ENCODE measurements at regions of chr11 and their contacts with region 1.

Region 1: GRCh38 chr11:83156150-83156995 is 558 bp upstream of the PCF11 start:
- DNase-seq: peak; percentile 94 to 99 (median 99)
- H3K4me3 ChIP-seq: peak overlapping the region; percentile 94 to 96
- H3K4me3 Mint-ChIP-seq: peak overlapping the region; percentile 99 to 100 (median 100)
- H3K27ac ChIP-seq: peak overlapping the region; percentile 98
- H3K27ac Mint-ChIP-seq: peak overlapping the region; percentile 99 to 100 (median 100)
- H3K4me1 ChIP-seq: peaks cover 23% of the 10 kb centered on the region
- H3K4me1 Mint-ChIP-seq: peaks cover 17 to 45% (median 28%) of the 10 kb centered on the region in 4 donors
- H3K27me3 ChIP-seq: no peaks in the 10 kb centered on the region
- H3K27me3 Mint-ChIP-seq: no peaks in the 10 kb centered on the region

Region 2: GRCh38 chr11:82906244-82906654 is 250.1 kb before region 1 on chr11:
- CTCF ChIA-PET with region 1: interaction called, 18 read pairs
- POLR2A ChIA-PET with region 1: interaction called, 124 read pairs
- intact Hi-C with region 1: loop called (anchors 1 kb)
- DNase-seq: peak in 4 of 5 donors; percentile 45 to 51 (median 48)
- H3K4me3 ChIP-seq: no peak overlapping the region
- H3K4me3 Mint-ChIP-seq: no peak overlapping the region
- H3K27ac ChIP-seq: no peak overlapping the region
- H3K27ac Mint-ChIP-seq: no peak overlapping the region
- H3K4me1 ChIP-seq: peaks cover 18% of the 10 kb centered on the region
- H3K4me1 Mint-ChIP-seq: peaks cover 11 to 22% (median 16%) of the 10 kb centered on the region in 4 donors
- H3K27me3 ChIP-seq: no peaks in the 10 kb centered on the region
- H3K27me3 Mint-ChIP-seq: no peaks in the 10 kb centered on the region

Region 3: GRCh38 chr11:82969811-82970210 is 186.6 kb before region 1 on chr11:
- CTCF ChIA-PET with region 1: no interaction called
- POLR2A ChIA-PET with region 1: interaction called, 16 read pairs
- intact Hi-C with region 1: loop called (anchors 1 kb)
- DNase-seq: no peak
- H3K4me3 ChIP-seq: no peak overlapping the region
- H3K4me3 Mint-ChIP-seq: peak overlapping the region in 2 of 8 donors; percentile 2 to 43
- H3K27ac ChIP-seq: no peak overlapping the region
- H3K27ac Mint-ChIP-seq: no peak overlapping the region
- H3K4me1 ChIP-seq: peaks cover 7% of the 10 kb centered on the region
- H3K4me1 Mint-ChIP-seq: peaks cover 18 to 39% (median 19%) of the 10 kb centered on the region in 4 donors
- H3K27me3 ChIP-seq: no peaks in the 10 kb centered on the region
- H3K27me3 Mint-ChIP-seq: no peaks in the 10 kb centered on the region

Region 4: GRCh38 chr11:83087035-83087434 is 69.3 kb before region 1 on chr11:
- CTCF ChIA-PET with region 1: interaction called, 6 read pairs
- POLR2A ChIA-PET with region 1: interaction called, 12 read pairs
- intact Hi-C with region 1: no loop called
- DNase-seq: no peak
- H3K4me3 ChIP-seq: no peak overlapping the region
- H3K4me3 Mint-ChIP-seq: no peak overlapping the region
- H3K27ac ChIP-seq: no peak overlapping the region
- H3K27ac Mint-ChIP-seq: peak overlapping the region in 2 of 7 donors; percentile 32 to 58
- H3K4me1 ChIP-seq: no peaks in the 10 kb centered on the region
- H3K4me1 Mint-ChIP-seq: peaks cover 0 to 13% (median 11%) of the 10 kb centered on the region in 4 donors
- H3K27me3 ChIP-seq: no peaks in the 10 kb centered on the region
- H3K27me3 Mint-ChIP-seq: no peaks in the 10 kb centered on the region

Region 5: GRCh38 chr11:83140696-83141455 is 15.5 kb before region 1 on chr11:
- CTCF ChIA-PET with region 1: interaction called, 5 read pairs
- POLR2A ChIA-PET with region 1: interaction called, 13 read pairs
- intact Hi-C with region 1: no loop called
- DNase-seq: no peak
- H3K4me3 ChIP-seq: no peak overlapping the region
- H3K4me3 Mint-ChIP-seq: no peak overlapping the region
- H3K27ac ChIP-seq: no peak overlapping the region
- H3K27ac Mint-ChIP-seq: no peak overlapping the region
- H3K4me1 ChIP-seq: no peaks in the 10 kb centered on the region
- H3K4me1 Mint-ChIP-seq: peaks cover 0 to 2% (median 0%) of the 10 kb centered on the region in 4 donors
- H3K27me3 ChIP-seq: no peaks in the 10 kb centered on the region
- H3K27me3 Mint-ChIP-seq: peaks cover 0 to 1% of the 10 kb centered on the region in 2 donors

Region 6: DNA sequence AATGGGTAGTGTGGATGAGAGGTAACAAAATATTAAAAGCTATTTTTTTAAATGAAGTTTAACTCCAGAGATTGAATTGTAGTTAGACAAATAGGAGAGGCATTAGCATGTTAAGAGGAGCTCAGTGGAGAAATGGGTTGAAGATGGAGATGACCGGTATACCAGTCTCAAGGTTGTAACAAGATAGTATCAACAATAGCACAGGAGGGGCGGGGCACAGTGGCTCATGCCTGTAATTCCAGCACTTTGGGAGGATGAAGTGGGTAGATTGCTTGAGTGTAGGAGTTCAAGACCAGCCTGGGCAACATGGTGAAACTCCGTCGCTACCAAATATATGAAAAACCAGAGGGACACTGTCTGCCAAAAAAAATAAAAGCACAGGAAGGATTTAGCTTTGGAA is 31.1 kb after region 1 on chr11:
- CTCF ChIA-PET with region 1: interaction called, 7 read pairs
- POLR2A ChIA-PET with region 1: interaction called, 59 read pairs
- intact Hi-C with region 1: no loop called
- DNase-seq: no peak
- H3K4me3 ChIP-seq: no peak overlapping the region
- H3K4me3 Mint-ChIP-seq: no peak overlapping the region
- H3K27ac ChIP-seq: no peak overlapping the region
- H3K27ac Mint-ChIP-seq: peak overlapping the region in 4 of 7 donors; percentile 45 to 80 (median 64)
- H3K4me1 ChIP-seq: peaks cover 11% of the 10 kb centered on the region
- H3K4me1 Mint-ChIP-seq: peaks cover 7 to 14% (median 14%) of the 10 kb centered on the region in 4 donors
- H3K27me3 ChIP-seq: no peaks in the 10 kb centered on the region
- H3K27me3 Mint-ChIP-seq: no peaks in the 10 kb centered on the region

Region 7: DNA sequence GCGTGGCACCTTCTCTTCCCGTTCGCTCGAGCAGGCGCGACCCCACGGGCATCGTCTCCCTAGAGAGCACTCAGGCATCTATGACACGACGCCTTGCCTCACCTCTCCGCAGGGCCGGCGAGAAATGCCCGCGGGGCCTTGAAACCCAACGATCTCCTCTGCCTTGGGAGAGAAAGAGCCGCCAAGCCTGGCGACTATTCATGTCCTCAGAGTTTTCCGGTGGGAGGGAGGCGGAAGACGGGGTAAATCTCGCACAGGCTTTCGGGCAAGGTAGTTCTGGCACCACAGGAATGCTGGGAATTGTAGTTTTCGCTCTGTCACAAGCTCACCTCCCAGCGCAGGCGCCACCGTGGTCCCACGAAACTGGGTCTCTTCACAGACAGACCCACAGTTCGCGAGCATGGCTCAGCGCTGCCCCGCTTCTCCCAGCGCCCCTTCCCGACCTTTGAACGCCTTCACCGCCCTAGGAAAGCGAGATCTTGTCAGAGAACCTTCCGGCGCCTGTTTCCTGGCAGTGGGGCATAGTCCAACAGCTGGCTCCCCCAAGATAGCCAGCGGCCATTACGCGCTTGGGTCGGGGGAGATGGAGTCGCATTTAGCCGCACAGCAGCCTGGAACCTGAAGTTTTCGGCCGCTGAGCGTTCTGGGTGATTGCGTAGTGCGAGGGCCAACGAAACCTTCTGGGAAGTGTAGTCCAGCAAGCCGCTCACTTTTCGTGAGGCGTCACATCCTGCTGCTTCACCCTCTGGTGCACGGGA is 129.6 kb after region 1 on chr11 and contains the start of gene CCDC90B:
- CTCF ChIA-PET with region 1: interaction called, 7 read pairs
- POLR2A ChIA-PET with region 1: interaction called, 47 read pairs
- intact Hi-C with region 1: loop called (anchors 1 kb)
- DNase-seq: peak; percentile 95 to 97 (median 97)
- H3K4me3 ChIP-seq: peak within 1 kb of the TSS; percentile 89 to 92
- H3K4me3 Mint-ChIP-seq: peak within 1 kb of the TSS; percentile 94 to 99 (median 98)
- H3K27ac ChIP-seq: peak within 1 kb of the TSS; percentile 95
- H3K27ac Mint-ChIP-seq: peak within 1 kb of the TSS; percentile 98 to 100 (median 100)
- H3K4me1 ChIP-seq: peaks cover 42% of the 10 kb centered on the region
- H3K4me1 Mint-ChIP-seq: peaks cover 26 to 46% (median 34%) of the 10 kb centered on the region in 4 donors
- H3K27me3 ChIP-seq: no peaks in the 10 kb centered on the region
- H3K27me3 Mint-ChIP-seq: no peaks in the 10 kb centered on the region
- total RNA-seq, gene CCDC90B: 37.6 to 38.0 TPM

Region 8: GRCh38 chr11:83374311-83374710 is 217.9 kb after region 1 on chr11:
- CTCF ChIA-PET with region 1: no interaction called
- POLR2A ChIA-PET with region 1: no interaction called
- intact Hi-C with region 1: no loop called
- DNase-seq: no peak
- H3K4me3 ChIP-seq: no peak overlapping the region
- H3K4me3 Mint-ChIP-seq: no peak overlapping the region
- H3K27ac ChIP-seq: no peak overlapping the region
- H3K27ac Mint-ChIP-seq: no peak overlapping the region
- H3K4me1 ChIP-seq: no peaks in the 10 kb centered on the region
- H3K4me1 Mint-ChIP-seq: no peaks in the 10 kb centered on the region
- H3K27me3 ChIP-seq: no peaks in the 10 kb centered on the region
- H3K27me3 Mint-ChIP-seq: peaks cover 8% of the 10 kb centered on the region in 2 donors

Region 9: DNA sequence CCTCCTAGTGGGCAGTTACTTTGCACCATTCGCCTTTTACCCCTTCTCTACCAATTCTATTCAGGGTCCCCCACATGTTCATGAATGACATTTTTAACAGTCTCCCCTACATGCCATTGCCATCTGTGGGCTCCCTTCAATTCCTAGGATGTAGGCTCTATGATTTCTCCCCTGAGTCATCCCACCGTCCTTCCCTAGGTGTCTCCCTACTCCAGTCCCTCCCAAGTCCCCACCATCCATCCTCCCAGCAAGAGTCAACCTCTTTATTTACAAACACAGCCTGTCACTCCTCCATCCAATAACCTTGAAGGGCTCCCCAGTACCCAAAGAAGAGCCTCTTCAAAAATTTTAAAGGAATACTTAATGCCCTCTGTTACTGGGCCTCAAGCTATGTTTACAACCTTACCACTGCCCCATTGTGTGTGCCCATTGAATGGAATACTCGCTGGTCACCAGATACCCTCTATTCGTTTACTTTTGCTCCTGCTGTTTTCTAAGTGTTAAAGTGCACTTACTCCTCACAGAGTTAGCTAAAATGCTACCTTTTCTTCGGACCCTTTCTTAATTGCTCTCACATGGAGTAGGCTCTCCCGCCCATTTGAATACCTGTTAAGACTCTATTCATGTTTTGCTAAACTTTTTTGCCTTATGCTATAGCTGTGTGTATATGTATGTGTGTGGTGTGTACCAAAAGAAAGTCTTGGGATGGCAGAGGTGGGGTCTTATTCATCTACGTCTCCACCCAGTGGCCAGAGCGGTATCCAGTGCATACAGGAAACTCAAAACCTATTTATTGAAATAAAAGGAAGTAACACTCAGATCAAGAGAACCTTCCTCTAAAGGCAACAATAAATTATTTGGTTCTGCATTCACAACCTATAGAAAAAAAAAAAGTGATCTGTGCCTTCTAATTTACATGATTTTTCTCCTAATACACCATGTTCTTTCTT is 365.5 kb after region 1 on chr11:
- CTCF ChIA-PET with region 1: no interaction called
- POLR2A ChIA-PET with region 1: no interaction called
- intact Hi-C with region 1: no loop called
- DNase-seq: no peak
- H3K4me3 ChIP-seq: no peak overlapping the region
- H3K4me3 Mint-ChIP-seq: no peak overlapping the region
- H3K27ac ChIP-seq: no peak overlapping the region
- H3K27ac Mint-ChIP-seq: no peak overlapping the region
- H3K4me1 ChIP-seq: no peaks in the 10 kb centered on the region
- H3K4me1 Mint-ChIP-seq: no peaks in the 10 kb centered on the region
- H3K27me3 ChIP-seq: no peaks in the 10 kb centered on the region
- H3K27me3 Mint-ChIP-seq: peaks cover 0 to 2% of the 10 kb centered on the region in 2 donors